ENCODE measurements at regions of chr1 and their contacts with region 1.

Region 1: GRCh38 chr1:89719502-89720306 is 86.8 kb downstream of the LRRC8C start:
- DNase-seq: no peak

Region 2: DNA sequence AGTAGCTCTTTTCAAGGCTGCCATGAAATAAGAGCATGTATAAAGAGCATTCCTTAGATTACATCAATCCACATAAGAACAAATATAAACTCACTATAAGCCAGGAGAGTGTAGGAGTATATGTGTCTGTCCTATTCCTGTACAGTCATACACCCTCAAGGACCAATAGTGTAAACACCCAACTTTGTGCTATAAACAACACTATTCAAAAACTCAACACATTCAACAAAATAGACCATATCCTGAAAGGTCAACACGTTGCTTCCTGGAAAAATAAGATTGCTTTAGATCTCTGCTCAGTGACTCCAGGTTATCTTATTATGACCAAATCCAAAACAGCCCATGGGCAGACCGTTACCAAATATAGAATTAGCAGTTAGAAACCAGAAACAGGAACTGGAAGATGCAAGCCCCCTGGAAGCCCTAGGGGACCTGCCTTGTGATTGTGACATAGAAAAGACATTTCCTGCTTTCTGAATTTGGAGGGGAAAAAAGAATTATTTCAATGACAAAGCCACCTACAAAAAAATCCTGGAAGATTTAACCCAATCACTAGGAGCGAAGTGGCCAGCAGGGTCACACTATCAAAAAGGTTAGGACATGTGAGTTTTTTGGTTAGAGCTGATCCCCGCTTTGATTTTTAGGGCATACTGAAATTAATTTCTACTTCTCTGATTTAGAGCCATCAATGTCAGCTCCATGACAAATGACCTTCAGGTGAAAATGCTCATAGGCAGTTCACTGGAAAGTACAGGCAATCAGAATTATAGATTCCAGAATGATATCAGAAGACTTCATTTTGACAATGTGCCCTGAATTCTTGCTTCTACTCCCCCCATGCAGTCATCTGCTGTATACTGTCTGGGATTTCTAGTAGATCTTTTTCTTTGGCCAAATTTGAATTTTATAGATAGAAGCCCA is 26.8 kb before region 1 on chr1:
- intact Hi-C with region 1: loop called (anchors 2 kb)
- DNase-seq: no peak

Region 3: DNA sequence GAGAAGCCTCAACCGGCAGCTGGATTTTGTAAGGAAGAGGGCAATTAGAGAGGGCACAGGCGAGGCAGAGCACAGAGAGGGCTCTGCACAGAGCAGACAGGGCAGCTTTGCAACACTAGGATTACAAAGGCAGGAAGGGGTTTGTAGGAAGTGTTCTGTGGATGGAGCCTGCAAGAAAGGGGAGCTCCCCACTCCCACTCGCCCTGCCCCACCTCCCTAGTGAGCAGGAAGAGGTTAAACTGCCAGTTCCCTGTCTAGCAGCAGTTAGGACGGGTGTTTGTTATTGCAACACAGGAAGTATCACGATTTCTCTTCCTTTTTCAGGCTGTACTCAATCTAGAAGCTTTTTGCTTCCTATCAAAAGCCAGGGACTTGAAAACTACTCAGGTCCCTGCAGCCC is 37.8 kb after region 1 on chr1:
- intact Hi-C with region 1: loop called (anchors 2 kb)
- DNase-seq: no peak

Measured in cardiac septum (tissue), 1 donor.